ENCODE measurements at regions of chr10 and their contacts with region 1.

Region 1: GRCh38 chr10:124176349-124177176 is 83.2 kb upstream of the CHST15 start:
- DNase-seq: peak in 1 of 2 donors; percentile 13
- ATAC-seq: no peak

Region 2: GRCh38 chr10:124354411-124355382 is 178.1 kb after region 1 on chr10:
- intact Hi-C with region 1: loop called in 1 of 2 experiments (anchors 10 kb)
- DNase-seq: peak in 1 of 2 donors; percentile 48
- ATAC-seq: peak; percentile 85